Caco-2 (cell line): ENCODE measurements at regions of chr11 and their contacts with region 1.

Region 1: DNA sequence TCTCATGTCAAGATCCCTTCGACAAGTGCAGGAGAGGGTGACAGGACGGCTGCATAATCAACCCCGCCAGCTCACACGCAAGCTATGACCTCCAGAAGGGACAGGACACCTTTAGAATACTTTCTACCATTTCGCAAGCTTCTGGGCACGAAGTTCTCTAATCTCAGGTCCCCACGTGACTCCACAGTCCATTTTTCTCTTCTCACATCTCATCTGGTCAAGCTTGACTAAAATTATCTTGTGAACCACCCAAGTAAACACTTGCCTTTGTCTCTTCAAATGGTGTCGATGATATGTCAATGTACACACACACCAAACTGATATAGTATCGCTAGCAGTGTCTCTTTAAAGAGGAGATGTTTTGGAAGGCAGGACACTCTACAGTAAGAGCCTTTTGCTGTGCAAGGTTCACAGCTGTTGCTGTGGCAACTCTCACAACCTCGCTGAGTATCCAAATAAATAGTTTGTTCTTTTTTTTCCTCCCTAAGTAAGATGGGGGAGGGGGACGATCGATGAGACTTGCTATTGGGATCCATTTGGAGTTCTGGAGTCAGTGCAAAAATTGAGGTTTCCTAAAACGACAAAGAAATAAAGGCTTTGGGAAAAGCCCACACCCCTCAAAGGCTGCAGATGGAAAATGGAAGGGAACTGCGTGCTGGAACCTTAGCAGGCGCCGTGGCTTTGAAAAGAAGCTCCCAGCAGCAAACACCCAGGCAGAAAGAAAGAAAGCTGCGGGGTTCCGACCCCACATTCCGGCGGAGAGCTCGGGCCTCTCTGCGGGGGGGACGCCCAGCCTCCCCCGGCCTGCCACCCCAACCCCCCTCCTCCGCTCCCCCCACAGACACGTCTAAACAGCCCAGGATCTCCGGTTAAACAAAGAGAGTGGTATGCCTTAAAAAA is 215.4 kb upstream of the UBASH3B start:
- DNase-seq: peak; percentile 72 to 87
- H3K4me3 ChIP-seq: peak overlapping the region; percentile 28
- H3K4me3 Mint-ChIP-seq: peak overlapping the region; percentile 73
- H3K27ac Mint-ChIP-seq: peak overlapping the region; percentile 85
- H3K4me1 ChIP-seq: peaks cover 20% of the 10 kb centered on the region
- H3K4me1 Mint-ChIP-seq: peaks cover 12% of the 10 kb centered on the region
- H3K27me3 ChIP-seq: no peaks in the 10 kb centered on the region
- H3K27me3 Mint-ChIP-seq: no peaks in the 10 kb centered on the region
- CTCF ChIP-seq: no peak

Region 2: DNA sequence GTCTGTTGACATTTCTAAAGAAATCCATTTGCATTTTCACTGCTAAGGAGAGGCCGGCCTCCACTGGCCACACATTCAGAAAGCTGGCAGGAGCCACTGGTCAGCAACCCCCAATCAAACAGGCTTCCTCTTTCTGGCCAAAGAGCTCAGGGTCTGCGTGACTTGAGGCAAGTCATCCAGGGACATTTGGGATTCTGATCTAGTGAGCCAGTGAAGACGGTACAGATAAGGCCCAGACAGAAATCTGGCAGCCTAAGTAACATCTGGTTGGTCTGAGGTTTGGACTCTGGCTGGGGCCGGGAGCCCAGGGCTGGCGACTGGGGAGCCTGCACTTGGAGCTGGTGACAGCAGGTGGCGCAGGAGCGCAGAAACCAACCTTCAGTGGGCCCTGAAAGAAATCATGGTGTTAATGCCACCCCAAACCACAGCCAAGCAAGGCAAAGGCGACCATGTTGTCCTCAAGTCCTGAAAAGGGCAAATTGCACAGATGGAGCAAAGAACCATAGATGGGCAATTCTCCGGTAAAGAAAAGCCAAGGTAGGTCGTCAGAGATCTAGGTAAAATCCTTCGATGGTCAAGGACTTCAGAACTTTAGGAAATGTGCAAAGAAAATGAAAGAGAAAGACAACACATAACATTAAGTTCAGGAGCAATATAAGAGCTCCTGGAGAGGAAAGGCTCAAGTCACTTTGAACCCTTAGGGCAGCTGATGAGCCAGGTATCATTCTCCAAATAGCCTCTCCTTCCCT is 224.7 kb before region 1 on chr11:
- CTCF ChIA-PET with region 1: no interaction called
- POLR2A ChIA-PET with region 1: no interaction called
- intact Hi-C with region 1: loop called (anchors 5 kb)
- DNase-seq: peak; percentile 68 to 82
- H3K4me3 ChIP-seq: no peak overlapping the region
- H3K4me3 Mint-ChIP-seq: no peak overlapping the region
- H3K27ac Mint-ChIP-seq: no peak overlapping the region
- H3K4me1 ChIP-seq: no peaks in the 10 kb centered on the region
- H3K4me1 Mint-ChIP-seq: no peaks in the 10 kb centered on the region
- H3K27me3 ChIP-seq: no peaks in the 10 kb centered on the region
- H3K27me3 Mint-ChIP-seq: peaks cover 12% of the 10 kb centered on the region
- CTCF ChIP-seq: peak; percentile 98 to 99

Region 3: DNA sequence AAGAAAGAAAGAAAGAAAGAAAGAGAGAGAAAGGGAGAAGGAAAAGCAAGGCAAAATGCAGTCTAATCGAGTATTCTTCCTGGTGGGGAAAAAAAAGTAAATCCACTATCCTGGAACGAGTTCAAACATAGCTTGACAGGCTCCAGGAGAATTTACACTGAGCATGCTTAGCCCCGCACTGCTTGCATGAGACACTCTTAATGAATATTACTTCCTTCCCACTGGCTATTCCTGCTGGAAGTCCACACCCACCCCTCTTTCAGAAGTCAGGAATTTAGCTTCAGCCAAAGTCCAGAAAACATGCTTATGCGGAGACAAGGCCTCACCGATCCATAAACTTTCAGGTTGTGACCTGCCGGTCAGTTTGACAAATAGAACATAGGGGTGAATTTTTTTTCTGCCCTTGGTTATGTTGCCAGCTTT is 72.3 kb before region 1 on chr11:
- CTCF ChIA-PET with region 1: no interaction called
- POLR2A ChIA-PET with region 1: no interaction called
- intact Hi-C with region 1: loop called (anchors 2 kb)
- DNase-seq: peak; percentile 78 to 90
- H3K4me3 ChIP-seq: no peak overlapping the region
- H3K4me3 Mint-ChIP-seq: peak overlapping the region; percentile 58
- H3K27ac Mint-ChIP-seq: peak overlapping the region; percentile 41
- H3K4me1 ChIP-seq: peaks cover 16% of the 10 kb centered on the region
- H3K4me1 Mint-ChIP-seq: peaks cover 16% of the 10 kb centered on the region
- H3K27me3 ChIP-seq: no peaks in the 10 kb centered on the region
- H3K27me3 Mint-ChIP-seq: peaks cover 5% of the 10 kb centered on the region
- CTCF ChIP-seq: no peak

Region 4: DNA sequence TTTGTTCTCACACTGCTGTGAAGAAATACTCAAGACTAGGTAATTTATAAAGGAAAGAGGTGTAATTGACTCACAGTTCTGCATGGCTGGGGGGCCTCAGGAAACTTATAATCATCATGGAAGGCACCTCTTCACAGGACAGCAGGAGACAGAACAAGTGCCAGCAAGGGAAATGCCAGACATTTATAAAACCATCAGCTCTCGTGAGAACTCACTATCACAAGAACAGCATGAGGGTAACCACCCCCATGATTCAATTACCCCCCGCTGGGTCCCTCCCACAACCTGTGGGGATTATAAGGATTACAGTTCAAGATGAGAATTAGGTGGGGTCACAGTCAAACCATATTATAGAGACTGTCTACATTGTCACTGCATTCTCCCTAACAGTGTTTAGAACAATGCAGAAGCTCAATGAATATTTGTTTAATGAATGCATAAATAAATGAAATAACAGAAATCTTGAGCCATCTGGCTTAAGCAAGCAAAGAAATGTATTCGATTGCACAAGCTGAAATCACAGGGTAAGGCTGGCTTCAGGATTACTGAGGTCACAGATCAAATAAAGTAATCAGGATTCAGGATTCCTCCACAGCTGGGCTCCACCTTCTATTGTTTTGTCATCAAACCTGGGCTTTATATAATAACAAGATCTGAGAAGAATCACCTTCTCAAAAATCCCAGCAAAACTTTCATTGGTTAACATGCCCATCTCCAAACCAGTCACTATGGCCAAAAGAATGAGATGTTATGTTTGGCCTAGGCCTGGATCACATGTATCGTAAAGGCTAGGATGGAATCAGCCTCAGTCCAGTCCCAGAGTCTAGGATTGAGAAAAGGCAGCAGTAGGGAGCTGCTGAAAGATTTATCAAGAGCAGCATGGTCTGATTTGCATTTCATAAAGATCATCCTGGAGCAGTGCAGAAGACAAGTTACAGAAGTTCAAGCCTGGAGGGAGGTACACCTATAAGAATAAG is 77.5 kb after region 1 on chr11:
- CTCF ChIA-PET with region 1: no interaction called
- POLR2A ChIA-PET with region 1: no interaction called
- intact Hi-C with region 1: no loop called
- DNase-seq: no peak
- H3K4me3 ChIP-seq: no peak overlapping the region
- H3K4me3 Mint-ChIP-seq: no peak overlapping the region
- H3K27ac Mint-ChIP-seq: no peak overlapping the region
- H3K4me1 ChIP-seq: no peaks in the 10 kb centered on the region
- H3K4me1 Mint-ChIP-seq: no peaks in the 10 kb centered on the region
- H3K27me3 ChIP-seq: no peaks in the 10 kb centered on the region
- H3K27me3 Mint-ChIP-seq: peaks cover 11% of the 10 kb centered on the region
- CTCF ChIP-seq: no peak